SK-N-SH (cell line): ENCODE measurements at regions of chr11 and their contacts with region 1.

Region 1: GRCh38 chr11:18243783-18244362 is 4.6 kb downstream of the SAA2 start:
- DNase-seq: peak; percentile 53
- H3K4me3 ChIP-seq: no peak overlapping the region
- H3K27ac ChIP-seq: no peak overlapping the region
- H3K4me1 ChIP-seq: no peaks in the 10 kb centered on the region
- H3K27me3 ChIP-seq: no peaks in the 10 kb centered on the region; the same call in 1 of the 2 replicates
- CTCF ChIP-seq: peak; percentile 88
- EP300 ChIP-seq: no peak
- RAD21 ChIP-seq: peak; percentile 78

Region 2: DNA sequence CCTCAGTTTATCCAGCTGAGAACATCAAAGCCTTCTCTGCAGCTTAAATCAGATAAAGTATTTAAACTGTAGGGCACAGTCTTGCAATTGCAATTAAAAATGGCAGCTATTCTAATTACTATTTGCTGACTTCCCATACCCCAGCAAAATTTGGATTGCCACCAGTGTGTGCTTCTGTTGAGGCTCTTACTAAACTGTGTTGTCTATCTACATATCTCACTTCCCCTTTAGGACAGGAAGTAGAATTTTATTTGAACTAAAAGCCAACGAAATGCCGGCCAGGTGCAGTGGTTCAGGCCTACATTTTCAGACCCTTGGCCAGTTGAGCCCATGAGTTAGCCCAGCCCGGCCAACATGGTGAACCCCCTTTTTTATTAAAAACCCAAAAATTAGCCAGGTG is 14.4 kb before region 1 on chr11:
- CTCF ChIA-PET with region 1: interaction called, 19 read pairs
- POLR2A ChIA-PET with region 1: no interaction called
- DNase-seq: no peak
- H3K4me3 ChIP-seq: no peak overlapping the region
- H3K27ac ChIP-seq: no peak overlapping the region
- H3K4me1 ChIP-seq: no peaks in the 10 kb centered on the region
- H3K27me3 ChIP-seq: no peaks in the 10 kb centered on the region
- CTCF ChIP-seq: no peak
- EP300 ChIP-seq: no peak
- RAD21 ChIP-seq: no peak

Region 3: GRCh38 chr11:18254781-18255361 is 11.0 kb after region 1 on chr11:
- CTCF ChIA-PET with region 1: interaction called, 11 read pairs
- POLR2A ChIA-PET with region 1: no interaction called
- DNase-seq: no peak
- H3K4me3 ChIP-seq: no peak overlapping the region
- H3K27ac ChIP-seq: no peak overlapping the region
- H3K4me1 ChIP-seq: no peaks in the 10 kb centered on the region
- H3K27me3 ChIP-seq: no peaks in the 10 kb centered on the region
- CTCF ChIP-seq: no peak
- EP300 ChIP-seq: no peak
- RAD21 ChIP-seq: no peak

Region 4: GRCh38 chr11:18285841-18286240 is 42.0 kb after region 1 on chr11:
- CTCF ChIA-PET with region 1: interaction called, 10 read pairs
- POLR2A ChIA-PET with region 1: no interaction called
- DNase-seq: no peak
- H3K4me3 ChIP-seq: no peak overlapping the region
- H3K27ac ChIP-seq: no peak overlapping the region
- H3K4me1 ChIP-seq: no peaks in the 10 kb centered on the region
- H3K27me3 ChIP-seq: no peaks in the 10 kb centered on the region
- CTCF ChIP-seq: no peak
- EP300 ChIP-seq: no peak
- RAD21 ChIP-seq: no peak